ENCODE measurements at regions of chr20 and their contacts with region 1.

Region 1: GRCh38 chr20:11935212-11936154 is 17.8 kb downstream of the BTBD3 start:
- DNase-seq: no peak
- H3K4me3 ChIP-seq: no peak overlapping the region
- H3K27ac ChIP-seq: no peak overlapping the region
- H3K4me1 ChIP-seq: no peaks in the 10 kb centered on the region
- H3K27me3 ChIP-seq: no peaks in the 10 kb centered on the region
- CTCF ChIP-seq: no peak

Region 2: DNA sequence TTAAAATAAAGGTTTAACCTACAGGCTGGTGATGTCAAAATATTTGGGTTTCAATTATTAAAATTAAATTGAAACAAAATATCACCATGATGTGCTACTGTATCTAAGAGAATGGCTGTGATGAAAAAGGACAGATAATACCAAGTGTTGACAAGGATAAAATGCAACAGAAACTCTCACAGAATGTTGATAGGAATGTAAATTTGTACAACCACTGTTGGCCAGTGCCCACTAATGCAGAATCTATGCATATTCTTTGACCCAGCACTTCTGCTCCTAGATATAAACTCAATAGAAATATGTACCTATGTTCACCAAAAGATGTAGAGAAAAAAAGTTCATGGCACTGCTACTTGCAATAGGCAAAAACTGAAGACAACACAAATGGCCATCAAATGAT is 58.9 kb before region 1 on chr20:
- intact Hi-C with region 1: no loop called
- DNase-seq: no peak
- H3K4me3 ChIP-seq: no peak overlapping the region
- H3K27ac ChIP-seq: no peak overlapping the region
- H3K4me1 ChIP-seq: no peaks in the 10 kb centered on the region
- H3K27me3 ChIP-seq: no peaks in the 10 kb centered on the region
- CTCF ChIP-seq: no peak

Region 3: DNA sequence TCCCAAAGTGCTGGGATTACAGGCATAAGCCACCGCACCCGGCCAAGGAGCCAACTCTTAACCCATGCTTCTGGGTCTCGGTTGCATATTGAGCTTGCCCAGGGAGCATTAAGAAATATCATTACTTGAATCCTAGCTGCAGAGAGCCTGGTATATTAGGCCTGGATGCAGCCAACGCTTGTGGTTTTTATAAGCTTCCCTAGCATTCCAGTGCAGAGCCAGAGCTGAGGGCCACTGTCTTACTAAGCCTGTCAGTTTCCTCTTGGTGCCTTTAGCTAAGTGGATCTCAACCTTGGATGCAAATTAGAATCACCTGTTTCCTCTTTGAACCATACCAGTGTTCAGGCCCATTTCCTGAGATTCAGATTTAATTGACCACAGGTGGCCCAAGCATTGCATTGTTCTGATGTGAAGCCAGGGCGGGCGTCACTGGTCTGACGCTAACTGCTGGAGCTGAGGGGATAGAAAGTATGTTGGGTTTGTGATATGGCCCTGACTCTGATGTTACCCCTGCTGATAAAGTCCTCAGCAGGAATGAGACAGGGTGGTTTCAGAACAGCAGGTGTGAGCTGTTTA is 58.5 kb after region 1 on chr20:
- intact Hi-C with region 1: loop called (anchors 10 kb)
- DNase-seq: peak in 2 of 5 donors; percentile 16 to 19
- H3K4me3 ChIP-seq: no peak overlapping the region
- H3K27ac ChIP-seq: no peak overlapping the region
- H3K4me1 ChIP-seq: no peaks in the 10 kb centered on the region
- H3K27me3 ChIP-seq: no peaks in the 10 kb centered on the region
- CTCF ChIP-seq: no peak

Region 4: GRCh38 chr20:12012241-12013222 is 77.0 kb after region 1 on chr20:
- intact Hi-C with region 1: no loop called
- DNase-seq: peak in 4 of 5 donors; percentile 14 to 54 (median 36)
- H3K4me3 ChIP-seq: no peak overlapping the region
- H3K27ac ChIP-seq: no peak overlapping the region
- H3K4me1 ChIP-seq: no peaks in the 10 kb centered on the region
- H3K27me3 ChIP-seq: no peaks in the 10 kb centered on the region
- CTCF ChIP-seq: peak; percentile 64